ENCODE measurements at regions of chr11 and their contacts with region 1.

Region 1: GRCh38 chr11:6778518-6778917 is 4.3 kb upstream of the OR2AG1 start:
- DNase-seq: no peak
- H3K4me3 ChIP-seq: no peak overlapping the region
- H3K27ac ChIP-seq: no peak overlapping the region
- H3K4me1 ChIP-seq: no peaks in the 10 kb centered on the region
- H3K27me3 ChIP-seq: no peaks in the 10 kb centered on the region
- CTCF ChIP-seq: no peak
- POLR2A ChIP-seq: no peak

Region 2: GRCh38 chr11:6799402-6799801 is 20.9 kb after region 1 on chr11 and contains the start of gene OR6A2:
- intact Hi-C with region 1: no loop called
- DNase-seq: no peak
- H3K4me3 ChIP-seq: no peak within 1 kb of the TSS
- H3K27ac ChIP-seq: no peak within 1 kb of the TSS
- H3K4me1 ChIP-seq: no peaks in the 10 kb centered on the region
- H3K27me3 ChIP-seq: no peaks in the 10 kb centered on the region
- CTCF ChIP-seq: no peak
- POLR2A ChIP-seq: no peak
- total RNA-seq, gene OR6A2: 0.16 to 1.2 (median 0.33) TPM

Region 3: DNA sequence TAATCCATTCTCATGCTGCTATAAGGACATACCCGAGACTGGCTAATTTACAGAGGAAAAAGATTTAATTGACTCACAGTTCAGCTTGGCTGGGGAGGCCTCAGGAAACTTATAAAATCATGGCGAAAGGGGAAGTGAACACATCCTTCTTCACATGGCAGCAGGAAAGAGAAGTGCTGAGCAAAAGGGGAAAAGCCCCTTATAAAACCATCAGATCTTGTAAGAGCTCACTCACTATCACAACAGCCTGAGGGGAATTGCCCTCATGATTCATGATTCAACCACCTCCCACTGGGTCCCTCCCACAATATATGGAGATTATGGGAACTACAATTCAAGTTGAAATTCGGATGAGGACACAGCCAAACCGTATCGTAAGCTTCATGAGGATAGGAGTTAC is 898.6 kb after region 1 on chr11:
- intact Hi-C with region 1: loop called (anchors 5 kb)
- DNase-seq: no peak
- H3K4me3 ChIP-seq: no peak overlapping the region
- H3K27ac ChIP-seq: no peak overlapping the region
- H3K4me1 ChIP-seq: peaks cover 0 to 10% of the 10 kb centered on the region in 2 donors
- H3K27me3 ChIP-seq: no peaks in the 10 kb centered on the region
- CTCF ChIP-seq: no peak
- POLR2A ChIP-seq: no peak